Right cardiac atrium (tissue), 5 donors: ENCODE measurements at regions of chr7 and their contacts with region 1.

Region 1: DNA sequence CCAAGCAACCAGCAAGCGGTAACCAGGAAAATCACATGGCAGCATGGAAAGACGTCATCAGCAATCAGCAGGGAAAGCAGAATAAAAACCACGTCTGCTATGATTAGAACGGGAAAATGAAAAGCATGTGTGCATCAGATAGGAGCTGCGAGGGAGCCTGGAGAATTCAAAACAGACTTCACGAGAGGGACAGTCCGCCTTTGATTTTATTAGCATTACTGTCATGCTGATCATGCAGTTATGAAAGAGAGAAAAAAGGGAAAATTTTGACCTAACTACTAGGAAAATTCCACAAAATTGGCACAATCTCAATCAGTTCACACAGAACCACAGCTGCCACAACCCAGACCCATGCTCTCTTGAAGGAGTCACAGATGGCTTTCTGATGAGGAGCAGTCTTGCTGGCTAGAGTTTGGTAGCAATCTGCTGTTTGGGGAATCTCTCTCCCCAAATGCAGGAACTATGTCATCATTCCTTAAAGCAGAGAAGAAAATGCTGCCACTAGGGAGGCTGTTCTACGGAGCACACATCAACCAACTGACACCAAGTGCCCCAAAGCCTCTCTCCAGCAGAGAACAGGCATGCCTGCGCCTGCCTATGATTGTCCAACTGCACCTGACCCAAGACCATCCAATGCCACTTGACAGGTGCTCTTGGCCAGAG is 295.9 kb downstream of the TNS3 start:
- DNase-seq: no peak
- ATAC-seq: peak in 1 of 2 donors; percentile 47
- H3K4me3 ChIP-seq: no peak overlapping the region
- H3K27ac ChIP-seq: peak overlapping the region; percentile 78
- H3K4me1 ChIP-seq: no peaks in the 10 kb centered on the region
- H3K27me3 ChIP-seq: no peaks in the 10 kb centered on the region

Region 2: DNA sequence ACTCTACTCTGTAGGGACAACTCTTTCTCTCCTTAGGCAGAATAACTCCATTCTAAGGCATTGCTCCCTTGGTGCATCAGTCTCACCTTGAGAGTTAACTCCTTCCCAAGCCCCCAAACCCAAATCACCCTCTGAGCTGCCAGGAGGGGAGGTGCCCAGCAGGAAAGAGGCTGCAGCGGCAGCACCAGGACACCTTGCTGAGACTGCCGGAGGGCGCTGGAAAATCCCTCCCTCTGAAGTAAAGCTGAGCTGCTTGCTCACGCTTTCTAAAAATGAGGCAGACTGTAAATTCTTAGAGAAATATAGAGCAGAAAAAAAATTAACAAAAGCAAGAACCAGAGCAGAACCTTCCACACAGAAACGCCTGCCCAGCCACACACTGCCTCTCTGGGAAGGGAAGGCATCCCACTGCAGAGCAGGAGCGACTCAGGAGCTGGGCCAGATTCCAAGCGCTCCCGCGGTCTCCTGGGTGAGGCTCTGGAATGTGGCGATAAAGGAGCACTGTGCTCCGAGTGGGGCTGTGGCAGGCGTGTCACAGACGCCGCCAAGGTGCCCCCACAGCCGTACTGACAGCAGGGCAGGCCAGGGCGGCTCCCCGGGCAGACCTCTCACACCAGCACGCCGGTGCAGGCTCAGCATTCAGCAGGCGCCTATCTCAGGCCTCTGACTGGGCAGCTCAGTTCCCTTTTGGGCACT is 93.8 kb after region 1 on chr7:
- intact Hi-C with region 1: loop called in 1 of 4 experiments (anchors 10 kb)
- DNase-seq: peak; percentile 81 to 94 (median 92)
- ATAC-seq: peak; percentile 90 to 92
- H3K4me3 ChIP-seq: no peak overlapping the region
- H3K27ac ChIP-seq: peak overlapping the region; percentile 21
- H3K4me1 ChIP-seq: peaks cover 24% of the 10 kb centered on the region
- H3K27me3 ChIP-seq: no peaks in the 10 kb centered on the region